PC-3 (cell line): ENCODE measurements at regions of chr1 and their contacts with region 1.

Region 1: DNA sequence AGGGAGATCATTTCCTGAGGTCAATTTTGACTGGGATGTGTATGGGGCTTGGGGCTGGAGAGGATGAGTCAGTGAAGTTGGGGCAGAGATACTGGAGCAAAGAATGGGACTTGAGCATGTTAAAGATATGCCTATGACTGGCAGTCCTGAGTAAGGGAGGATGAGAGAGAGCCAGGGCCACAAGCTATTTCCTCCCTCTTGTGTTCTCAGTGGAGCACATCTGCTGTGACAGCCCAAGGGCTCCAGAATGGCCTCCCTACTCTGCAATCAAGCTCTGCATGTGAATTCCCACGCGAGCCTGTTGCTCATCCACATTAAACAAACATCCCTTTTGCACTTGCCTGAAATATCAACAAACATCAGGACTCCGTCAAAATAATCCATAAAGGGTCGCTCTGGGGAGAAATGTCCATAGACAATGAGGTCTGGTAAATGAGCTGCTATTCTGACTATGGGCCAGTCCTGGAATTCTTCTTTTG is 9.2 kb downstream of the ADCY10 start:
- DNase-seq: peak; percentile 51
- ATAC-seq: peak; percentile 91
- H3K4me3 ChIP-seq: no peak overlapping the region
- H3K27ac ChIP-seq: no peak overlapping the region
- H3K4me1 ChIP-seq: peaks cover 8% of the 10 kb centered on the region; the same call in 1 of the 2 replicates
- H3K27me3 ChIP-seq: no peaks in the 10 kb centered on the region
- CTCF ChIP-seq: no peak

Region 2: GRCh38 chr1:167819849-167820683 is 84.6 kb before region 1 on chr1:
- CTCF ChIA-PET with region 1: no interaction called
- POLR2A ChIA-PET with region 1: no interaction called
- intact Hi-C with region 1: loop called (anchors 5 kb)
- DNase-seq: peak; percentile 93
- ATAC-seq: peak; percentile 99
- H3K4me3 ChIP-seq: peak overlapping the region; percentile 56
- H3K27ac ChIP-seq: peak overlapping the region; percentile 83
- H3K4me1 ChIP-seq: peaks cover 11% of the 10 kb centered on the region
- H3K27me3 ChIP-seq: no peaks in the 10 kb centered on the region
- CTCF ChIP-seq: no peak

Region 3: GRCh38 chr1:167950569-167950968 is 45.9 kb after region 1 on chr1:
- CTCF ChIA-PET with region 1: no interaction called
- POLR2A ChIA-PET with region 1: no interaction called
- intact Hi-C with region 1: no loop called
- DNase-seq: no peak
- ATAC-seq: peak; percentile 54
- H3K4me3 ChIP-seq: no peak overlapping the region
- H3K27ac ChIP-seq: no peak overlapping the region
- H3K4me1 ChIP-seq: peaks cover 11% of the 10 kb centered on the region
- H3K27me3 ChIP-seq: no peaks in the 10 kb centered on the region
- CTCF ChIP-seq: no peak

Region 4: DNA sequence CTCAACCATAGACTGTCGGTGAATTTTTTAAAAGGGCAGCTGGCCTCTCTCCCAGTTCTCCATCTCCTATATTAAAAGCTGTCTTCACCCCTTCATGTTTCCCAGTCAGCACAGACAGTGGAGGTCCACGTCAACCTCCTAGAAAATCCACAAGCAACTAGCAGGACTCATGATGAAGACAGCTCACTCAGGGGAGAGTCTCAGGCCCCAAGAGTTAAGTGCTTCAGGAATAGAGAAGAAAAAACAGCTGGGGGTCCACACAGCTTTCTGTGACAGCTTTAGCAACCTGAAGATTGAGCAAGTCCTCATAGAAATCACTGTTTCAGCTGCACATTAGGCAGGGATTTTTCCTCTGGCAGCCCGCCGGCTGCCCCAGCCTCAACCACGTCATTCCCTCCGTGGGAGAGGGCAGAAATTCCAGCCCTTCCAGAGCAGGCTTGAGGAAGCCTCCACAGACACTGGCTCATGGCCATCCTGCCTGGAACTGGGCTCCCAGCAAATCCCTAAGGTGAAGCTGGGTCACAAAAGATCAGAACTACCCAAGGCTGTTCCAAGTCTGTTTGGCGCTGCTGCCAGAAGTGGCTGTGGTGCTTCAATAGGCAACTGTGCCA is 216.8 kb after region 1 on chr1:
- CTCF ChIA-PET with region 1: no interaction called
- POLR2A ChIA-PET with region 1: no interaction called
- intact Hi-C with region 1: no loop called
- DNase-seq: no peak
- ATAC-seq: no peak
- H3K4me3 ChIP-seq: no peak overlapping the region
- H3K27ac ChIP-seq: no peak overlapping the region
- H3K4me1 ChIP-seq: no peaks in the 10 kb centered on the region
- H3K27me3 ChIP-seq: no peaks in the 10 kb centered on the region
- CTCF ChIP-seq: no peak

Region 5: DNA sequence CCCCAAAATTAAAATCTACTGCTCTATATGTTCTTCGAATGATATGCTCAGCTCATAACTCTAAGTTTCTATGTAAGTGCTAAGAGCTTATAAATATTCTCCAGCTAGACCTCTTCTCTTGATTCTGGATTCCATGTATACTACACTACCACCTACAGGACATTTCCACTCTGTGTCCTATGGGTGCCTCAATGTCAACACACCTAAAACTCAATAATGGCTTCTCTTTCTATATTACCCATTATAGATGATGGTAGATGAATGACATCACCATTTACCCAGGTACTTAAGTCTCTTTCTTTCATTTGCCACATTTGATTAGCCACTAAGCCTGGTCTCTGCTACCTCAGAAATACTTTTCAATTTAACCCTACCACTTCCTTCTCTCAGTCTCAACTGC is 417.3 kb after region 1 on chr1:
- CTCF ChIA-PET with region 1: no interaction called
- POLR2A ChIA-PET with region 1: no interaction called
- intact Hi-C with region 1: no loop called
- DNase-seq: peak; percentile 75
- ATAC-seq: peak; percentile 79
- H3K4me3 ChIP-seq: no peak overlapping the region
- H3K27ac ChIP-seq: no peak overlapping the region
- H3K4me1 ChIP-seq: peaks cover 17% of the 10 kb centered on the region
- H3K27me3 ChIP-seq: no peaks in the 10 kb centered on the region
- CTCF ChIP-seq: peak; percentile 84